Heart left ventricle (tissue), 16 donors: ENCODE measurements at regions of chr17 and their contacts with region 1.

Region 1: DNA sequence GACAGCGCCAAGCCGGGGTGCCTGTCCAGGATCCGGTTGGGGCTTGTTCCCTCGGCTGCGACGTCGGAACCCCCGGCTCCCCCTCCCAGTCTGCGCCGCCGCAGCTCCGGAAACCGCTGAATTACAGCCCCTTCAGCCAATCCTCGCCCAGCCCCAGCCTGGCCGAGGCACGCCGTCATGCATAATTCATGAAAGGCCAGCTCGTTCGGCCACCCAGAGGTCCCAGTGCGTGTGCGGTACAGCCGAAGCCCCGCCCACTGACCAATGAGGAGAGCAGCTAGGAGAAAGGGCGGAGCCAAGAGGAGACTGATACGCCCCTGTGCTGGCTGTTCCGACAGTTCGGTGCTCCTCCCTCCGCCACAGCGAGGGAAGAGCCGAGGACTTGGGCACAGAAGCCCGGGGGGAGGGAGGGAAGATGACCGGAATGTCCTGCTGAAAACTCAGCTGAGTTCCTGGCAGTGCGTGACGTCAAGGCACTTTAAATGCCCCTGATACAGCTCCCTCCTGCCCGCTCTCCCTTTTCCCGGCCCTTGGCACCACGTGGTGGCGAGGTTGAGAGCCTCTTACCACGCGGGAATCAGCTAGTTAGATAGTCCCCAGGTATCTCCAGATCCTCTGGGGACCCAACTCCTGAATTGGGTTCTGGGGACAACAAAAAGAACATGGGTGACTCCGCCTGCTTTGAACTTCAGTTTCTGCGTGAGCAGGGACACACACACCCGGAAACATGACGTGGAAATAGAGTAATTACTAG is at the start of gene STAT3:
- DNase-seq: peak; percentile 100
- ATAC-seq: peak; percentile 95 to 99 (median 98)
- H3K4me3 ChIP-seq: peak within 1 kb of the TSS; percentile 76 to 100 (median 89)
- H3K27ac ChIP-seq: peak within 1 kb of the TSS; percentile 96 to 100 (median 99)
- H3K4me1 ChIP-seq: peaks cover 3 to 49% (median 24%) of the 10 kb centered on the region in 12 donors
- H3K27me3 ChIP-seq: no peaks in the 10 kb centered on the region
- CTCF ChIP-seq: peak in 2 of 12 donors; percentile 11 to 25
- POLR2A ChIP-seq: peak in 1 of 2 donors; percentile 98
- total RNA-seq, gene STAT3: 111 to 614 (median 148) TPM

Region 2: DNA sequence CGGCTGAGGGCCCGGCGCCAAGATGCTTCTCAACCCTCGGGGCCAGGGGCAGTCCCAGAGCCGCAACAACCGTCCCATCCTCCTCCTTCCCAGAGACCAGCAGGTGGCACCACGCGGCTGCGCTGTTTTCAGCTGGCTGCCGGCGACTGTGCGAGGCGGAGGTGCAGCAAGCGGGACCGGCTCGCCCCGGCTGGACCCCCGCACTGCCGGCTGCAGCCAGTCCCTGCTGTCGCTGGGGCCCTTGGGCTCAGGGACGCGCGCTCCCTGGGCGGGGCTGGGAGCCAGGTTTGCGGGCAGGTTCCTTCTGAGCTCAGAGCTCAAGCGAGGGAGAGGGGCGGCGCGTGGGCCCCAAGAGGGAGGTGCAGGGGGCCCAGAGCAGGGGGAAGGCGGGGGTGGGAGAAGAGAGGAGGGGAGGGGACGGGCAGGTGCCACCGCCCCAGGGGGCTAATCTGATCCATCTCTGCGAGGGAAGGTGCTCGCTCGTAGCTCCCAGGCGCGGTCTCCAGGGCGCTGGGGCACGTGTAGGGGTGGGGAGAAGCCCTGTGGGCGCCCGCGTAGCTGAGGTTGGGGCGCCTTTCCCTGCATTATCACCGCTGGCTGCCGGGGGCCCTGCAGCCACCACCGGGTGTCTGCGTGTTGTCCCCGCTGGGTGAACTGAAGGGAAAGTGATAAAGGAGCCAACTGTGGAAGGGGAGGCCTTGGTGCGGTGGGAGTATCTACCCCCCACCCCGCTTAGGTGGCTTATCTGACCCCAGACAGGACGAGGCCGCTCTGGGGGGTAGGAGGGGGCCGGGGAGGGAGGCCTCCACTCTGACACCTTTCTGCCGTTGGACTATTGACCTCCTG is 76.0 kb before region 1 on chr17:
- intact Hi-C with region 1: no loop called
- DNase-seq: peak; percentile 87 to 92 (median 91)
- ATAC-seq: peak; percentile 75 to 85 (median 82)
- H3K4me3 ChIP-seq: peak overlapping the region in 9 of 12 donors; percentile 1 to 44 (median 24)
- H3K27ac ChIP-seq: peak overlapping the region; percentile 55 to 92 (median 76)
- H3K4me1 ChIP-seq: peaks cover 4 to 47% (median 27%) of the 10 kb centered on the region in 12 donors
- H3K27me3 ChIP-seq: no peaks in the 10 kb centered on the region
- CTCF ChIP-seq: peak; percentile 38 to 77 (median 66)
- POLR2A ChIP-seq: no peak

Region 3: GRCh38 chr17:42329025-42329976 is 59.3 kb before region 1 on chr17:
- intact Hi-C with region 1: loop called in 4 of 10 experiments (anchors 5 kb)
- DNase-seq: no peak
- ATAC-seq: peak; percentile 39 to 78 (median 51)
- H3K4me3 ChIP-seq: no peak overlapping the region
- H3K27ac ChIP-seq: peak overlapping the region in 11 of 12 donors; percentile 25 to 69 (median 43)
- H3K4me1 ChIP-seq: peaks cover 0 to 19% (median 15%) of the 10 kb centered on the region in 12 donors
- H3K27me3 ChIP-seq: no peaks in the 10 kb centered on the region
- CTCF ChIP-seq: peak in 1 of 12 donors; percentile 13
- POLR2A ChIP-seq: no peak

Region 4: DNA sequence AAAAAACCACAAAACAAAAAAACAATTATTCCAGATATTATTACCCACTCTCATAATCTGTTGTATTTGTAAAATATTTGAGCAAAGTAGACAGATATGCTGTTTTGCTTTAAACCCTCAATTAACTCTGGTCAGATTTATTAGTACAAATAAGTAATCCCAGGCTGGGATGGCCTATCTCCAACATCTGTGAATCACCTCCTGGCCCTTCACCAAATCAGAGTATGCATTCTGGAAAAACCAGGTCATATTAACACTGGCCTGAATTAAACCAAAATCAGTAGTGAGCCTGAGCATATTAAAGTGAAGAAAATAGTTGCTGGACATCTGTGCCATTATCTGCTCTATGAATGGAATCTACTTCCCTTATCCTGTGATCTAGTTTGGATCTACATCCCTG is 41.4 kb before region 1 on chr17:
- intact Hi-C with region 1: loop called in 4 of 10 experiments (anchors 5 kb)
- DNase-seq: peak in 3 of 5 donors; percentile 36 to 44 (median 43)
- ATAC-seq: peak in 2 of 4 donors; percentile 32 to 45
- H3K4me3 ChIP-seq: no peak overlapping the region
- H3K27ac ChIP-seq: peak overlapping the region in 9 of 12 donors; percentile 9 to 71 (median 25)
- H3K4me1 ChIP-seq: peaks cover 4 to 62% (median 31%) of the 10 kb centered on the region in 12 donors
- H3K27me3 ChIP-seq: no peaks in the 10 kb centered on the region
- CTCF ChIP-seq: no peak
- POLR2A ChIP-seq: no peak

Region 5: GRCh38 chr17:42358434-42358833 is 30.1 kb before region 1 on chr17:
- intact Hi-C with region 1: no loop called
- DNase-seq: no peak
- ATAC-seq: no peak
- H3K4me3 ChIP-seq: no peak overlapping the region
- H3K27ac ChIP-seq: peak overlapping the region in 1 of 12 donors; percentile 59
- H3K4me1 ChIP-seq: peaks cover 4 to 91% (median 52%) of the 10 kb centered on the region in 12 donors
- H3K27me3 ChIP-seq: no peaks in the 10 kb centered on the region
- CTCF ChIP-seq: no peak
- POLR2A ChIP-seq: no peak

Region 6: GRCh38 chr17:42405963-42406495 is 17.5 kb after region 1 on chr17:
- intact Hi-C with region 1: loop called in 1 of 10 experiments (anchors 2 kb)
- DNase-seq: peak; percentile 83 to 92 (median 83)
- ATAC-seq: peak; percentile 56 to 73 (median 68)
- H3K4me3 ChIP-seq: peak overlapping the region in 7 of 12 donors; percentile 8 to 33 (median 20)
- H3K27ac ChIP-seq: peak overlapping the region; percentile 65 to 100 (median 82)
- H3K4me1 ChIP-seq: peaks cover 27 to 93% (median 79%) of the 10 kb centered on the region in 12 donors
- H3K27me3 ChIP-seq: no peaks in the 10 kb centered on the region
- CTCF ChIP-seq: peak; percentile 77 to 92 (median 84)
- POLR2A ChIP-seq: no peak

Region 7: GRCh38 chr17:42642336-42642735 is 253.8 kb after region 1 on chr17:
- intact Hi-C with region 1: no loop called
- DNase-seq: no peak
- ATAC-seq: no peak
- H3K4me3 ChIP-seq: no peak overlapping the region
- H3K27ac ChIP-seq: no peak overlapping the region
- H3K4me1 ChIP-seq: no peaks in the 10 kb centered on the region
- H3K27me3 ChIP-seq: no peaks in the 10 kb centered on the region
- CTCF ChIP-seq: no peak
- POLR2A ChIP-seq: no peak